WTC11 (cell line): ENCODE measurements at regions of chr5 and their contacts with region 1.

Region 1: DNA sequence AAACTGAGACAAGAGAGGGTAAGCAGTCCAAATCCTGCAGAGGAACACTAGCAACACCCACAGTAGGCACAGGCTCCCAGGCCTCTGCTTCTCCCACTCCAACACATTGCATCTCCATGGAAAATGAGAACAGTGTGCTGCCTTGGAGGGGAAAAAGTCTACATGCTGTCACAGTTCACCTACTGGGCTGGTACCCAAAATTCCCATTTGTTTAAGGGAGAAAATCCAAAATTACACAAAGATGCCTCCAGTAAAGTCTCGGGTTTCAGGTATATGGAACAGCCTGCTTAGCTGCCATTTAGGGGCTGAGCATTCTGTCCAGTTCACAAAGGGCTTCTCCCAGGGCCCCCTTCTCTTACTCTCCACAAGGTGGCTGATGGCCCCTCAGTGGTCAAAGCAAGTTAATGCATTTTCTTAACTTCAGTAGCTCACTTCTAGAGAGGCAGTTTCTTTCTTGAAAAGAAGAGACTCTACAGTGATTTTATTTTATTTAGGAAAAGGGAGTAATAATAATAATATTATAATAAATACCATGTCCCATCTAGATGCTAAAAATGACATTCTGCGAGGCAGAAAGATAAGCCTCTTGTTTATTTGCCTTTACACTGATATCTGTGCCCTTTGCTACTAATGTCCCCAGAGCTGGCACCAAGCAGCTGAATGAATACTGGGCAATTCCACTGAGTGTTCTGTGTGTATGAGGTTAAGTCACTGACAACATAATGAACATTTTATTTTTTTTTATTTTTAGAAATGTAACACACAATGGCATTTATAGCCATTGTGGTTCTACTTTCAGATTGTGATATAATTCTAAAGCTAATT is 89.4 kb downstream of the RGS7BP start:
- DNase-seq: peak; percentile 52
- ATAC-seq: peak; percentile 90
- H3K4me3 Mint-ChIP-seq: no peak overlapping the region
- H3K27ac Mint-ChIP-seq: no peak overlapping the region
- H3K4me1 Mint-ChIP-seq: peaks cover 23% of the 10 kb centered on the region
- H3K27me3 Mint-ChIP-seq: no peaks in the 10 kb centered on the region
- CTCF ChIP-seq: no peak

Region 2: DNA sequence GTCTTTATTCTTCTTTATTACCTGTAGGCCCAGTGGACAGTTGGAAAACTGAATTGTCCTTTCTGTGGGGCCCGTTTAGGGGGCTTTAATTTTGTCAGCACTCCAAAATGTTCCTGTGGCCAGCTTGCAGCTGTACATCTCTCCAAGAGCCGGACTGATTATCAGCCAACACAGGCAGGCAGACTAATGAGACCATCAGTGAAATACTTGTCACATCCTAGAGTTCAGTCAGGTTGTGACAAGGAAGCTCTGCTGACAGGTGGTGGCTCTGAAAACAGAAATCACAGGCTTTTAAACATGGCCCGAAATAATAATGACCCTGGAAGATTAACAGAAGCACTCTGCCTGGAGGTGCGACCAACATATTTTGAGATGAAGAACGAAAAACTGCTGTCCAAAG is 381.7 kb before region 1 on chr5:
- CTCF ChIA-PET with region 1: interaction called, 11 read pairs
- POLR2A ChIA-PET with region 1: no interaction called
- DNase-seq: no peak
- ATAC-seq: no peak
- H3K4me3 Mint-ChIP-seq: no peak overlapping the region
- H3K27ac Mint-ChIP-seq: no peak overlapping the region; the same call in 1 of the 2 replicates
- H3K4me1 Mint-ChIP-seq: no peaks in the 10 kb centered on the region
- H3K27me3 Mint-ChIP-seq: no peaks in the 10 kb centered on the region
- CTCF ChIP-seq: no peak

Region 3: DNA sequence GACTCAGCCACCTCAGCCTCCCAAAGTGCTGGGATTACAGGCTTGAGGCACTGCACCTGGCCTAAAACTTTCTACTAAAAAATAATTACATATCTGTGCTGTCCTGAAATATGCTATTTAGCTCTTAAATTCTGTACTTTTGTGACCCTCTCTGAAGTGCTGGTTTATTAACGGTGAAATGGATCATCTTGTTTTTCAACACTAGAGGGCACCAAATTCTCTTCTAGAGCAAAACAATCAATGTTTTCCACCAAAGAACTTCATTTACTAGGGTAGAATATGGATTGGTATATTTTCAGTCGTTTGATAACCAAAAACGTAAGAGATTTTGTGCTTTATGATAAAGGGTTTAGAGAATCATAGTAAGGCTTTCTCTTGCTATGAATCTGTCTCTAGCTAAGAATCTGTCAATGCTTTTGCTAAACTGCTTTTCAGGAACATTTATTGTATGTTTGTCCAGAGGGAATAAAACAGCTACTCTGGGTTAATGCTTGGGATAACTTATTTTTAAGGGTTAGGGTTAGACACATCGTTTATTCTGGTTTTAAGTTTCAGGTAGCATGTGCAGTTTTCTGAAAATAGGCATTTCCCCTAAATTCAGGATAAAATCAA is 366.0 kb before region 1 on chr5:
- CTCF ChIA-PET with region 1: interaction called, 18 read pairs
- POLR2A ChIA-PET with region 1: no interaction called
- DNase-seq: no peak
- ATAC-seq: peak; percentile 56; the same call in 1 of the 2 replicates
- H3K4me3 Mint-ChIP-seq: no peak overlapping the region
- H3K27ac Mint-ChIP-seq: no peak overlapping the region
- H3K4me1 Mint-ChIP-seq: no peaks in the 10 kb centered on the region
- H3K27me3 Mint-ChIP-seq: no peaks in the 10 kb centered on the region
- CTCF ChIP-seq: peak; percentile 44

Region 4: GRCh38 chr5:64370721-64371120 is 224.5 kb before region 1 on chr5:
- CTCF ChIA-PET with region 1: no interaction called
- POLR2A ChIA-PET with region 1: no interaction called
- DNase-seq: no peak
- ATAC-seq: no peak
- H3K4me3 Mint-ChIP-seq: no peak overlapping the region
- H3K27ac Mint-ChIP-seq: no peak overlapping the region
- H3K4me1 Mint-ChIP-seq: no peaks in the 10 kb centered on the region
- H3K27me3 Mint-ChIP-seq: no peaks in the 10 kb centered on the region; the same call in 1 of the 2 replicates
- CTCF ChIP-seq: no peak

Region 5: GRCh38 chr5:64505769-64506566 is 89.3 kb before region 1 on chr5 and contains the start of gene RGS7BP:
- CTCF ChIA-PET with region 1: interaction called, 30 read pairs
- POLR2A ChIA-PET with region 1: interaction called, 5 read pairs
- DNase-seq: peak; percentile 75
- ATAC-seq: peak; percentile 74
- H3K4me3 Mint-ChIP-seq: peak within 1 kb of the TSS; percentile 88
- H3K27ac Mint-ChIP-seq: peak within 1 kb of the TSS; percentile 55; the same call in 1 of the 2 replicates
- H3K4me1 Mint-ChIP-seq: peaks cover 32% of the 10 kb centered on the region
- H3K27me3 Mint-ChIP-seq: peaks cover 46% of the 10 kb centered on the region
- CTCF ChIP-seq: no peak
- total RNA-seq, gene RGS7BP: 1.7 to 5.1 TPM (median 3.4 TPM) in 3 replicates